Right ventricle myocardium inferior (tissue), 1 donor: ENCODE measurements at regions of chr11 and their contacts with region 1.

Region 1: DNA sequence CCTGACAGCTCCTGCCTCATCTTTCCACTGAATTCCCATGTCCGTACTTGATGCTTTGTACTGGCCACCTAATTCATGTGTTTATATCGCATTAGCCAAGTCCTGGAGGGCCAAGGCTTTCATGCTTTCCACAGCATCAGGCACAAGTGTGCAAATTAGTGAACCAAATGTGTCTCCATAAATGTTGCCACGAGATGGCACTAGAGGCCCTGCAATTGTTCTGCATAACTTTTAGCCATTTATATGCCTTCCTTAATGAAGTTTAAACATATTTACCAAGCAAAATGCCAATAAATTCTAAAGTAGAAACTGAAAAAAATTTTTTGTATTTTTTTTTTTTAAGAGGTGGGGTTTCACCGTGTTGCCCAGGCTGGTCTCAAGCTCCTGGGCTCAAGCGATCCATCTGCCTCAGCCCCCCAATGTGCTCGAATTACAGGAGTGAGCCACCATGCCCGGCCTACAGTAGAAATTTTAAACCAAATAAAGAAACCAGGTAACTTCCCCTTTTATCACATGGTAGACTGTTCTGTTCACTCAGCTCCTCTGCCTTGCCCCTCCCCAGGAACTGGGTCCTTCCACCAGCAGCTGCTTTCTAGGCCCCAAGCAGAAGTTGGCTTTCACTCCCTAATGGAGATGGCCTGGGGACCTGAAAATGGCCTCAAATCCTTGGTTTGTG is 20.8 kb upstream of the IL18BP start:
- DNase-seq: no peak
- ATAC-seq: peak; percentile 54

Region 2: DNA sequence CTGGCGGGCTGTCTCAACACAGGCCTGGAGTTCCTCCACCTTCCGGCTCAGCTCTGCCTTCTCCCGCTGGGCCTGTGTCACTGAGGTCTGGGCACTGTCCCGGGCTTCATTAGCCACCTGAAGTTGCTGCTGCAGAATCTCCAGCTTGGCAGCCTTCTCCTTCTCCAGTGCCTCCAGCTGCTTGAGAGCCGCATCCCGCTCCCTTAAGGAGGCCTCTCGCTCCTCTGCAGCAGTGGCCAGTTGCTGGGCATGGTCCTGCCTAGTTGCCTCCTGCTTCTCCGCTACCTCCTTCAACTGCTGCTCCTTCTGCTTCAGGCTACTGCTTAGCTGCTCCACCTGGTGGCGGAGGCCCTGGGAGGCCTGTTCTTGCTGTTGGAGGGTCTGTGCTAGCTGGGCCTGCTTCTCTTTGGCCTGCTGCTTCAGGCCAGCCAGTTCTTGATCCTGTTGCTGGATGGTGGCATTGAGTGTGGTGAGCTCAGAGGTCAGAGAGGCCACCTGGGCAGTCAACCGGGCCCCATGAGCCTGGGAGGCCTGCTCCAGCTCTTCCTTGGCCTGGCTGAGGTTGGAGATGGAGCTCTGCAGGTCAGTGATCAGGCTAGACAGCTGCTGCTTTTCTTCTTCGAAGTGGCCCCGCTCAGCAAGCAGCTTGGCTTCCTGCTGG is 37.8 kb after region 1 on chr11:
- intact Hi-C with region 1: loop called (anchors 5 kb)
- DNase-seq: no peak
- ATAC-seq: no peak

Region 3: GRCh38 chr11:72141066-72141465 is 163.2 kb after region 1 on chr11:
- intact Hi-C with region 1: loop called (anchors 5 kb)
- DNase-seq: no peak
- ATAC-seq: no peak